Mammary epithelial cell (primary cell): ENCODE measurements at regions of chr3 and their contacts with region 1.

Region 1: GRCh38 chr3:55708242-55708641 is 221.1 kb upstream of the WNT5A start:
- DNase-seq: no peak
- H3K4me3 ChIP-seq: no peak overlapping the region
- H3K27ac ChIP-seq: no peak overlapping the region
- H3K4me1 ChIP-seq: no peaks in the 10 kb centered on the region
- H3K27me3 ChIP-seq: no peaks in the 10 kb centered on the region
- CTCF ChIP-seq: no peak

Region 2: GRCh38 chr3:55765906-55766701 is 57.9 kb after region 1 on chr3:
- CTCF ChIA-PET with region 1: no interaction called
- dilution Hi-C with region 1: no loop called
- in situ Hi-C with region 1: no loop called
- intact Hi-C with region 1: loop called (anchors 2 kb)
- DNase-seq: no peak
- H3K4me3 ChIP-seq: no peak overlapping the region
- H3K27ac ChIP-seq: no peak overlapping the region
- H3K4me1 ChIP-seq: no peaks in the 10 kb centered on the region
- H3K27me3 ChIP-seq: peaks cover 2% of the 10 kb centered on the region
- CTCF ChIP-seq: no peak

Region 3: DNA sequence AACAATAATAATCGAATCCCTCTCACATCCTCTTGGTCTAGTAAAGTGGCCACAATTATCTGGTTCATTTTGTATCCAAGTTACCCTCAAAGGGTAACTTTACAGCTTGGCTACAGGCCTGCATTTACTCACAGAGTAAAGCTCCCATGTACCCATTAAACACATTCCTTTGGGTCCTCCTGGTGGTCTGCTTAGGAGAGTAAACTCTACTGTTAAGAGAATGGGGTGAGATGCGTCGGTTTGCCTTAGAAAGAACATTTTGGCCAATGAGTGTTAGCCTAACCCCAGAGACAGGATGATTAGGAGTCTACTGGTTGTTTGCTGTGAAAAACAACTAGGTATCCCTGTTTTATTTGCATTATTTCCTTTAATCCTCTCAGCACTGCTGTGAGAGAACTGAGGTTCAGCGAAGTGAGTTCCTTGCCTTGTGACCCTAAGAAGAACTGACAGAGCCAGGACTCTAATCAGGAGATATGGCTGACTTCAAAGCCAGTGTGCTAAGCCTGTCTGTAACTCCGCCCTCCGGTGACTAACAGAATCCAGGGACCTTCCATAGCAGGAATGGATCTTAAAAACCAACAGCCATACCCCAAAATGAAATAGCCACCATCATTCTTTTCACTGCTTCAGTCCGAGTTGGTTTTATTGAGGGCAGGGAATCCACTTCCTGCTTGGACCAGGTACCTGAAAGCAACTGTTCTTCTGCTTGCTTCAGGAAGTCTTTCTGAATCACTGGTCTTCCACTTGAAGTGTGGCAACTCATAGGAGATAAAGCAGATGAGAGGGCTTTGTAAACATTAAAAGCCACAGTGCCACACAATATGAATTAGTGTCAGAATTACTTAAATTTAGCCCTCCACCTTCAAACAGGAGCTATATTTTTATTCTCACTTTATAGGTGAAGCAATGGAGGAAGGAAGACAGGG is 96.2 kb after region 1 on chr3:
- CTCF ChIA-PET with region 1: no interaction called
- dilution Hi-C with region 1: loop called (anchors 5 kb)
- in situ Hi-C with region 1: no loop called
- intact Hi-C with region 1: no loop called
- DNase-seq: no peak
- H3K4me3 ChIP-seq: no peak overlapping the region
- H3K27ac ChIP-seq: no peak overlapping the region
- H3K4me1 ChIP-seq: no peaks in the 10 kb centered on the region
- H3K27me3 ChIP-seq: no peaks in the 10 kb centered on the region
- CTCF ChIP-seq: no peak

Region 4: DNA sequence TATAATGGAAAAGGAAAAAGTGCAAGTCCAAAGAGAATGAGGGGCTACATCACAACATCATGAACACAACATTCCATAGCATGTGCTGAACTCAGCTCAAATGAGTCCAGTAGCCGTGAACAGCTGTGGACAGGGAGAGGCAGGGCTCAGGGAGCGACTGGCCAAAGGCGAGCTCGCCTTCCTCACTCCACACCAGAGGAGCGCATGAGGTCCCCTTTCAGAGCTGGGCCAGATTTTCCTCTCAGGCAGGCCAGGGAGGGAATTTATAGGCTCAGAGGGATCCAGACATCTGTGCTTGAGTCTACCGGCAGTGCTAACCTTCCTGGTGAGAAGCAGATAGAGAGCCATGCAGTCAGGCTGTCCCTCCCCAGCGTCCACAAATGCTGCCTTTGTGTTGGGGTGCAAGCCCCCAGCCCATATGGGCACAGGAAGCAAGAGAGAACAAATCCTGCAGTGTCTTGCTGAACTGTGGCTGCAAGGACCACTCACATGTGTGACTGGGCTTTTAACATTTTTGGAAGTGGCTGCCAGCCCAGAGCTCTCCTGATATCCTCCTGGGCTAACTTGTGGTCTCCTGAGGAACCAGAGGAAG is 1061.0 kb after region 1 on chr3:
- CTCF ChIA-PET with region 1: no interaction called
- dilution Hi-C with region 1: no loop called
- in situ Hi-C with region 1: no loop called
- intact Hi-C with region 1: no loop called
- DNase-seq: no peak
- H3K4me3 ChIP-seq: no peak overlapping the region
- H3K27ac ChIP-seq: no peak overlapping the region
- H3K4me1 ChIP-seq: no peaks in the 10 kb centered on the region
- H3K27me3 ChIP-seq: no peaks in the 10 kb centered on the region
- CTCF ChIP-seq: no peak